Activated T-helper 2 cell treated with anti-CD3 and anti-CD28 coated beads, Interferon-gamma antibody, Interleukin-2, Interleukin-4, amounts not matched to agents 10 μg/mL and 5 μg/mL and 100 μg/mL, durations not matched to agents 14 hours and 24 hours and 36 hours (primary cell): ENCODE measurements at regions of chr12 and their contacts with region 1.

Region 1: DNA sequence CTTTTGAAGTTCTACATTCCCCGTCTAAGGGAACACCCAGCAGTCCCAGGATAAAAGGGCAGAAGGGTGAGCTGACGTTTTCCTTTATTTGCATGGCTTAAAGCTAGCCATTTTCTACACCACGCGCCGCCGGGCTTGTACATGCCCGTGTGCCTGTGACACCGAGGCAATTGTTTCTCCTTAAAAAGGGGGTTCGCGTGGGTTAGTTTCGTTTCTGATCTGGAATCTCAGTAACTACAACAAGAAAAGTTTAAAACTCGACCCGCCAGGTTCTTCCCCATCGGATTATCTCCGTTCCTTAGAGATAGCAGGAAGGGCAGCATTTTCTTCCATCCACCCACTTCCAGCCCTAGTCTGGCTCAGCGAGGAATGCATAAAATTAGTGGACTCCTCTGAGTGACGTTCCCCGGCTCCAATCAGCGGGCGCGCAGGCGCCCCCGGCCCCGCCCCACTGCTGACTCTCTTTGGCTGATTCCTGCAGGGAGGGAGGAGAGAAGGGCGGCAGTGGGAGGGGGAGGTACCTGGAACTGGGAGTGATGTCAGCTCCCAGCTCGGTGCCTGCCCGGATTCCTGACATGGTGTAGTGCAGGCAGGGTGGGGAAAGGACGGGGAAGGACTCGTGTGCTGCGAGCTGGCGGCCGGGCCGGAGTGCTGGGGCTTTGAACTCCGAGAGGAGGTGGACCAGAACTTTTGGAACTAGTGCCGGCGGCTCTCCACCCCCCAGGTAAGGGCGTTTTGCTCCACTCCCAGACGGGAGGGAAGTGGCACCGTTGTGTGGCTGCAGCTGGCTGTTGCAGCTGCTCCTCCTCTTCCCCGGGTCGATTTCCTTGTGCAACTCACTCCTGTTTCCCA is at the start of gene PPFIBP1:
- DNase-seq: peak; percentile 80
- H3K4me3 Mint-ChIP-seq: peak within 1 kb of the TSS; percentile 83
- H3K27ac Mint-ChIP-seq: peak within 1 kb of the TSS; percentile 89
- H3K4me1 Mint-ChIP-seq: peaks cover 20% of the 10 kb centered on the region
- H3K27me3 Mint-ChIP-seq: peaks cover 55% of the 10 kb centered on the region
- total RNA-seq, gene PPFIBP1: 73.3 and 74.1 TPM in 2 replicates

Region 2: DNA sequence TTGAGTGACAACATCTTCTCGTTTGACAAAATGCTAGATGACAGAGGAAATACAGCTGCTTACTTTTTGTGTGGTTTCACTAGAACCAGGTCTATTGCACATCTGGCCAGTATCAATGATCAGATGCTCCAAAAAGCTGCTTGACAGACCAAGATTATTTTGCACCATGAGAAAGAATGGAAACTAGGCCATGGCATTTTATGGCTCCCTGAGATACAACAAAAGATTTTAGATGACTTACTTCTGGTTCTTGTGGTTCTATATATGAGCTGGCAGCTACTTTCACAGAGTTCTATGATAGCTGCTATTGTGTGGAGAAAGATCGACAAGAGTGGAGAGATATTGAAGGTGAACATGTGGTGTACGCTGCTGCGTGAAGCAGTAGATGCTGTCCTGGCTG is 25.7 kb before region 1 on chr12:
- intact Hi-C with region 1: loop called (anchors 1 kb)
- DNase-seq: peak; percentile 21
- H3K4me3 Mint-ChIP-seq: peak overlapping the region; percentile 15
- H3K27ac Mint-ChIP-seq: peak overlapping the region; percentile 90
- H3K4me1 Mint-ChIP-seq: peaks cover 60% of the 10 kb centered on the region
- H3K27me3 Mint-ChIP-seq: peaks cover 10% of the 10 kb centered on the region

Region 3: GRCh38 chr12:27534060-27534764 is 10.3 kb after region 1 on chr12:
- intact Hi-C with region 1: loop called (anchors 1 kb)
- DNase-seq: peak; percentile 19
- H3K4me3 Mint-ChIP-seq: peak overlapping the region; percentile 6
- H3K27ac Mint-ChIP-seq: peak overlapping the region; percentile 62
- H3K4me1 Mint-ChIP-seq: peaks cover 43% of the 10 kb centered on the region
- H3K27me3 Mint-ChIP-seq: peaks cover 3% of the 10 kb centered on the region